Heart right ventricle (tissue), 16 donors: ENCODE measurements at regions of chr2 and their contacts with region 1.

Region 1: DNA sequence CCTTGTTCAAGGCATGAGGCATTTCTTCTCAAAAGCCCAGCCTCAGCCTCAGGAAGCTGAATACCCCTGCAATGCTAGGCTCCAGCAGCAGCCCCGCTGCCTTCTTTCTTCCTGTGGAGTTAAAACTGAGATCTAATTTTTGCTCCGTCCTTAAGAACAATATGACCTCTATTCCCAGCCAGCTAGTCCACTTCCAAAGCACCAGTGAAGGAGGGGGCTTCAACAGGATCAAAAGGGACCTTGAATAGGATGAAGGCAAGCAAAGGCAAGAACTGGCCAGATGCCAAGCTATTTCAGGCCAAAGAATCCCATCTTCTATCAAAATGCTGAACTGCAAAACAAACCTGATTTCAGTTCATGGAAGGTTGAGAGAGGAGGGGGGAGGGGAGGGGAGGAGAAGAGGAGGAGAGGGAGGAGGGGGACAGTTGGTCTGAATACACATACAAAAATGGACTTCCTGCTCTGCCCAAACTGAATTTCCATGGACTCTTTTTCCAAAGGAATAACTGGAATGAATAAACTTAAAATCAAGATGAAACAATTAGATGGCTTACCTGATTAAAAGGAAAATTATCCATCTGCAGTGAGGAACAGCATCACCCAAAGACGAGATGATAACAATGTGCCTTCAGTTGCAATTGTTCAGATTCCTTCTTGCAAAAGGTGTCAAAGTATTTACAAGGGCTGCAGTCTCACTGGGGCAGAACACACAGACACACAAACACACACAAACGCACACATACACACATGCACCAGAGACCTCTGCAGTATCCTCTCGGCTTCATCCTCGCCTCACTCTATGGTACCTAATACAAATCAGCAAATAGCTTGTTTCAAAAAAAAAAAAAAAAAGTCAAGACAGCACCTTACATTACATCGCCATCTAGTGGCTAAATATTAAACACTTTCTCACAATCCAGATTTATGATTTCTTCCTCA is at the start of gene SCN1A:
- DNase-seq: no peak
- ATAC-seq: no peak
- H3K4me3 ChIP-seq: no peak within 1 kb of the TSS
- H3K27ac ChIP-seq: no peak within 1 kb of the TSS
- H3K4me1 ChIP-seq: peaks cover 0 to 7% (median 0%) of the 10 kb centered on the region in 9 donors
- H3K27me3 ChIP-seq: peaks cover 0 to 38% (median 11%) of the 10 kb centered on the region in 7 donors
- CTCF ChIP-seq: peak in 8 of 9 donors; percentile 50 to 74 (median 68)
- total RNA-seq, gene SCN1A: 0.11 to 1.3 (median 0.47) TPM

Region 2: GRCh38 chr2:165401285-165401852 is 726.1 kb before region 1 on chr2:
- intact Hi-C with region 1: loop called in 1 of 10 experiments (anchors 5 kb)
- DNase-seq: peak in 1 of 2 donors; percentile 34
- ATAC-seq: peak in 1 of 8 donors; percentile 56
- H3K4me3 ChIP-seq: no peak overlapping the region
- H3K27ac ChIP-seq: no peak overlapping the region
- H3K4me1 ChIP-seq: peaks cover 0 to 10% (median 0%) of the 10 kb centered on the region in 9 donors
- H3K27me3 ChIP-seq: peaks cover 0 to 24% (median 6%) of the 10 kb centered on the region in 7 donors
- CTCF ChIP-seq: peak; percentile 47 to 83 (median 77)

Region 3: DNA sequence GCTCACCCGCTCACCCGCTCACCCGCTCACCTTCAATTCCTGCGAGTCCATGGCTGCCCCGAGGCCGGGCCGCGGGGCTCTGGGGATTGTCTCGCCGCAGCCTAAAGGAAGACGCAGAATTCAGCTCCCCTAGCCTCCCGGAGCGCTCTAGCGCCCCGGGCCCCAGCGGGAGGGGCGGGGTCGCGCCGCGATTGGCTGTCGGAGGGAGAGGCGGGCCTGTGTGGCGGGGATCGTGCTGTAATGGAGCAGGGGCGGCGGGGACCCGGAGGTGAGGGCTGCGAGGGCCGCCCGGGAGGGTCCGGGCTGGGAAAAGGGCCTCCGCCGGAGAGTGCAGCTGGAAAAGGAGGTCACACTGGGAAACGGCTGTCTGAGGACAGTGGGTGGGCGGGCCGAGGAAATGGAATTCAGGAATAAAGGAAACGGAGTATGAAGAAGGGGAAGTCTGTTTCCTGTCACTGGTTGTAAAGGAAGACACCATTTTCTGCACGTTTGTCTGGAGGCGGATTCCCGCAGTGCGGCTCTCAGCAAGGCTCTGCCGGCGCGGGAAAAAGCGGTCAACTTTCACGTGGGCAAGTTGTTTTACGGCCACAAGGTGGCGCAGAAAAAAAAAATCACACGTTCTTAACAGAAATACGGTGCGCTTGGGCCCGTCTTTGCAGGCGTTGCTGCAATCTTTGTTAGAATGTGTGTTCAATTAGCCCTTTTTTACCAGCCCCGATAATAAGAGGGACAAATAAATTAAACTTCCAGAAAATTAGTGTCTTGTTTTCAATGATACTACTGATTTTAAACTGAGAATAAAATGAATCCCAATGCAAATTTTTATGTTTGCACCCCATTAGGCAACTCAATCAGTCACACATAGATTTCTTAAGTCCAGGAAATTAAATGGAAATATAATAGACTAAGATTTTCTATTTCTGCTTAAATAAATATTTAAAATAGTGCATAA is 173.6 kb before region 1 on chr2 and contains the start of gene TTC21B:
- intact Hi-C with region 1: loop called (anchors 2 to 10 kb)
- DNase-seq: peak; percentile 96
- ATAC-seq: peak; percentile 99 to 100 (median 100)
- H3K4me3 ChIP-seq: peak within 1 kb of the TSS; percentile 59 to 84 (median 79)
- H3K27ac ChIP-seq: peak within 1 kb of the TSS; percentile 56 to 92 (median 84)
- H3K4me1 ChIP-seq: peaks cover 3 to 35% (median 20%) of the 10 kb centered on the region in 9 donors
- H3K27me3 ChIP-seq: no peaks in the 10 kb centered on the region
- CTCF ChIP-seq: peak; percentile 75 to 89 (median 85)
- total RNA-seq, gene TTC21B: 10.9 to 17.9 (median 13.4) TPM

Region 4: GRCh38 chr2:166057370-166058164 is 69.9 kb before region 1 on chr2:
- intact Hi-C with region 1: loop called in 5 of 10 experiments (anchors 5 to 10 kb)
- DNase-seq: no peak
- ATAC-seq: no peak
- H3K4me3 ChIP-seq: no peak overlapping the region
- H3K27ac ChIP-seq: no peak overlapping the region
- H3K4me1 ChIP-seq: peaks cover 0 to 3% (median 0%) of the 10 kb centered on the region in 9 donors
- H3K27me3 ChIP-seq: no peaks in the 10 kb centered on the region
- CTCF ChIP-seq: peak in 8 of 9 donors; percentile 19 to 67 (median 52)

Region 5: DNA sequence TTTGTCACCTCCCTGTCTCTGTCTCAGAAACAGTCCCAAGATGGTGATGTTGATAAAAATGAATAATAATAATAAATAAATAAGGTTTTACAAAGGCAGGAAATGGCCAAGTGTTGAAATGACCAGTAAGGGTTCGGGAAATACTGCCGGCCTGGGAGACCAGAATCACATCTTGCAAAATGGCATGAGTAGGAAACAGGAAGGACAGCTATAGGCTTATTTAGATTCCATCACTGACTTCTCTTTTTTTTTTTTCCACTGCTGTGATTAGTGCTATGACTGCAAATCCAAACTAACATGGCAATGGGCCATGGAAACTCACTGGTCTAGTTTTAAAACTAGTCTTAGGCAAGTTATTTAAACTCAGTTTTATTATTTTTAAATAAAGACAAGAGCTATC is 60.3 kb before region 1 on chr2:
- intact Hi-C with region 1: loop called in 1 of 10 experiments (anchors 10 kb)
- DNase-seq: no peak
- ATAC-seq: no peak
- H3K4me3 ChIP-seq: no peak overlapping the region
- H3K27ac ChIP-seq: no peak overlapping the region
- H3K4me1 ChIP-seq: no peaks in the 10 kb centered on the region
- H3K27me3 ChIP-seq: peaks cover 0 to 8% (median 0%) of the 10 kb centered on the region in 7 donors
- CTCF ChIP-seq: no peak

Region 6: GRCh38 chr2:166180951-166181812 is 53.7 kb after region 1 on chr2:
- intact Hi-C with region 1: loop called in 1 of 10 experiments (anchors 2 kb)
- DNase-seq: peak; percentile 8 to 10
- ATAC-seq: peak in 6 of 8 donors; percentile 38 to 58 (median 56)
- H3K4me3 ChIP-seq: no peak overlapping the region
- H3K27ac ChIP-seq: no peak overlapping the region
- H3K4me1 ChIP-seq: no peaks in the 10 kb centered on the region
- H3K27me3 ChIP-seq: peaks cover 0 to 16% (median 0%) of the 10 kb centered on the region in 7 donors
- CTCF ChIP-seq: peak in 8 of 9 donors; percentile 10 to 56 (median 50)